ENCODE measurements at regions of chr3 and their contacts with region 1.

Region 1: GRCh38 chr3:26118165-26118564 is 328.3 kb downstream of the OXSM start:
- DNase-seq: no peak
- H3K4me3 ChIP-seq: no peak overlapping the region
- H3K27ac ChIP-seq: no peak overlapping the region
- H3K4me1 ChIP-seq: no peaks in the 10 kb centered on the region
- H3K27me3 ChIP-seq: no peaks in the 10 kb centered on the region
- CTCF ChIP-seq: peak; percentile 56

Region 2: GRCh38 chr3:25904206-25904605 is 214.0 kb before region 1 on chr3:
- intact Hi-C with region 1: loop called (anchors 5 kb)
- DNase-seq: no peak
- H3K4me3 ChIP-seq: no peak overlapping the region
- H3K27ac ChIP-seq: no peak overlapping the region
- H3K4me1 ChIP-seq: no peaks in the 10 kb centered on the region
- H3K27me3 ChIP-seq: no peaks in the 10 kb centered on the region
- CTCF ChIP-seq: peak; percentile 70

Measured in left ventricle myocardium inferior (tissue), 1 donor.